CD4-positive, alpha-beta T cell (primary cell): ENCODE measurements at regions of chr10 and their contacts with region 1.

Region 1: GRCh38 chr10:84333864-84334451 is 5.6 kb downstream of the CCSER2 start:
- DNase-seq: peak; percentile 38 to 95 (median 62)
- ATAC-seq: peak; percentile 78
- H3K4me3 ChIP-seq: no peak overlapping the region
- H3K4me3 Mint-ChIP-seq: peak overlapping the region; percentile 42
- H3K27ac ChIP-seq: peak overlapping the region; percentile 64 to 72
- H3K27ac Mint-ChIP-seq: peak overlapping the region; percentile 82
- H3K4me1 ChIP-seq: peaks cover 44% of the 10 kb centered on the region
- H3K4me1 Mint-ChIP-seq: peaks cover 54% of the 10 kb centered on the region
- H3K27me3 ChIP-seq: no peaks in the 10 kb centered on the region
- H3K27me3 Mint-ChIP-seq: no peaks in the 10 kb centered on the region
- CTCF ChIP-seq: no peak

Region 2: GRCh38 chr10:84139126-84140035 is 194.6 kb before region 1 on chr10 and contains the start of gene GHITM:
- CTCF ChIA-PET with region 1: no interaction called
- POLR2A ChIA-PET with region 1: interaction called, 14 read pairs
- intact Hi-C with region 1: loop called (anchors 1 to 2 kb)
- DNase-seq: peak; percentile 98 to 100 (median 99)
- ATAC-seq: peak; percentile 94
- H3K4me3 ChIP-seq: peak within 1 kb of the TSS; percentile 93
- H3K4me3 Mint-ChIP-seq: peak within 1 kb of the TSS; percentile 90
- H3K27ac ChIP-seq: peak within 1 kb of the TSS; percentile 95
- H3K27ac Mint-ChIP-seq: peak within 1 kb of the TSS; percentile 97
- H3K4me1 ChIP-seq: peaks cover 20% of the 10 kb centered on the region
- H3K4me1 Mint-ChIP-seq: peaks cover 30% of the 10 kb centered on the region
- H3K27me3 ChIP-seq: no peaks in the 10 kb centered on the region
- H3K27me3 Mint-ChIP-seq: no peaks in the 10 kb centered on the region
- CTCF ChIP-seq: peak; percentile 36
- total RNA-seq, gene GHITM: 64.7 to 67.9 TPM

Region 3: GRCh38 chr10:84308481-84309304 is 25.3 kb before region 1 on chr10:
- CTCF ChIA-PET with region 1: no interaction called
- POLR2A ChIA-PET with region 1: interaction called, 9 read pairs
- intact Hi-C with region 1: loop called in 1 of 2 experiments (anchors 2 kb)
- DNase-seq: peak in 12 of 14 experiments; percentile 12 to 65 (median 38)
- ATAC-seq: peak; percentile 67
- H3K4me3 ChIP-seq: peak overlapping the region; percentile 6
- H3K4me3 Mint-ChIP-seq: peak overlapping the region; percentile 2
- H3K27ac ChIP-seq: peak overlapping the region in 1 of 2 donors; percentile 7
- H3K27ac Mint-ChIP-seq: no peak overlapping the region
- H3K4me1 ChIP-seq: peaks cover 15% of the 10 kb centered on the region
- H3K4me1 Mint-ChIP-seq: peaks cover 16% of the 10 kb centered on the region
- H3K27me3 ChIP-seq: no peaks in the 10 kb centered on the region
- H3K27me3 Mint-ChIP-seq: no peaks in the 10 kb centered on the region
- CTCF ChIP-seq: no peak

Region 4: DNA sequence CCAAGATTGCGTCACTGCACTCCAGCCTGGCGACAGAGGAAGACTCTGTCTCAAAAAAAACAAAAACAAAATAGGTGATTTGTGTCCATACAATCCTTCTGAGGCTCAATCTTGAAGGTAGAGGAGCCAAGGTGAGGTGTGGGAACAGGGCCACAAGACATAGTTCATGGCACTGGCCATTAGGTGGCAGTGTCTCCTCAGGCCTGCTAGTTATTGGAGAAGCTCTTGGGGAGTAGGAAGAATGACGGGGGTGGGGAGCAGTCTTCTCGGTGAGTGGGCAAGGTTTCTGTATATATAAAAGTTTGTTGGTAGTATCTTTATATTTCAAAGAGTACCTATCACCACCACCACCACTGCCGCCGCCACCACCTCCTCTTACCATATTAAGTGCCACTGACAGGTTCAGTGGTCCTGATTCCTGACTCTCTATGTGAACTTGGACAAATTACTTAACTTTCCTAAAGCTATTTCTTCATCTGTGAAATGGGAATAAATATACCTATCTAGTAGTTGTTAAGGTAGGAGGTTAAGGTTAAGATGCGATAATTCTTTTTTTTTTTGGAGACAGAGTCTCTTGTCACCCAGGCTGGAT is 18.4 kb after region 1 on chr10:
- CTCF ChIA-PET with region 1: interaction called, 44 read pairs
- POLR2A ChIA-PET with region 1: interaction called, 6 read pairs
- intact Hi-C with region 1: no loop called
- DNase-seq: peak; percentile 45 to 84 (median 62)
- ATAC-seq: peak; percentile 90
- H3K4me3 ChIP-seq: no peak overlapping the region
- H3K4me3 Mint-ChIP-seq: no peak overlapping the region
- H3K27ac ChIP-seq: no peak overlapping the region
- H3K27ac Mint-ChIP-seq: peak overlapping the region; percentile 30
- H3K4me1 ChIP-seq: peaks cover 30% of the 10 kb centered on the region
- H3K4me1 Mint-ChIP-seq: peaks cover 81% of the 10 kb centered on the region
- H3K27me3 ChIP-seq: no peaks in the 10 kb centered on the region
- H3K27me3 Mint-ChIP-seq: no peaks in the 10 kb centered on the region
- CTCF ChIP-seq: peak; percentile 70

Region 5: GRCh38 chr10:85612833-85613232 is 1278.9 kb after region 1 on chr10:
- CTCF ChIA-PET with region 1: no interaction called
- POLR2A ChIA-PET with region 1: no interaction called
- intact Hi-C with region 1: loop called in 1 of 2 experiments (anchors 5 kb)
- DNase-seq: peak in 6 of 14 experiments; percentile 4 to 51 (median 30)
- ATAC-seq: peak; percentile 43
- H3K4me3 ChIP-seq: no peak overlapping the region
- H3K4me3 Mint-ChIP-seq: peak overlapping the region; percentile 78
- H3K27ac ChIP-seq: no peak overlapping the region
- H3K27ac Mint-ChIP-seq: peak overlapping the region; percentile 77
- H3K4me1 ChIP-seq: peaks cover 50% of the 10 kb centered on the region
- H3K4me1 Mint-ChIP-seq: peaks cover 76% of the 10 kb centered on the region
- H3K27me3 ChIP-seq: no peaks in the 10 kb centered on the region
- H3K27me3 Mint-ChIP-seq: no peaks in the 10 kb centered on the region
- CTCF ChIP-seq: peak; percentile 56